ENCODE measurements at regions of chr2 and their contacts with region 1.

Region 1: GRCh38 chr2:157492189-157492773 is 48.4 kb upstream of the CYTIP start:
- DNase-seq: no peak
- H3K4me3 ChIP-seq: no peak overlapping the region
- CTCF ChIP-seq: peak; percentile 73

Region 2: DNA sequence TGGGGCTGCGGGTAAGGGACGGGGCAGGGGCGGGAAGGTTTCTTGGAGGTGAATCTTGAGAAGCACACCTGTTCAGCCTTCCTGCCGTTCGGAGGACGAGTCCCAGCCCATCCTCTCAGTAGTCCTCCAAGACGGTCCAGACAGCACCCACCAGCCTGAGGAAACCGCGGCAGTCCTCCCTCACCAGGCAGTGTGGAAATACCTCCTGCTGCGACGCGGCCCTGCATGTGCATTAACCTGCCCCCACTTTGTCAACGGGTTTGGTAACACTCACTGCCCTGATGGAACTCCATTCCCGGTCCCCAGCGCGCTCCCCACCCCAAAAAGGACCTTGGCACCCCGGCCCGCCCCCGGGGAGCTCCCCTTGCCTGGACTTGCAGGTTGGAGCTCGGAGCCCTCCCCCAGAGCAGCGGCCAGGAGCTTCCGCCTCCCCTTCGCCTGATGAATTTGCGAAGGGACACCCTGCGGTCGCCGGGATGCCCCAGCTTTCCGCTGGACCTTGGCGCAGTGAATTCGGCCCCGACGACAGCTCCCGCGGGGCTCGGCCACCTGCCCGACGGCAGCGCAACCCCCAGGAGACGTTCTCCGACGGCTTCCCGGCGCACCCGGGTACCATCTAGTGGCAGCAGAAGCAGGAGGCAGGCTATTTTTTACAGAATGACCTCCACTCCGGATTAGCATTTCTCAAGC is 104.9 kb after region 1 on chr2:
- CTCF ChIA-PET with region 1: interaction called, 10 read pairs
- POLR2A ChIA-PET with region 1: no interaction called
- DNase-seq: no peak
- H3K4me3 ChIP-seq: peak overlapping the region; percentile 26
- CTCF ChIP-seq: peak; percentile 66